Activated CD4-positive, alpha-beta T cell treated with anti-CD3 and anti-CD28 coated beads for 36 hours (primary cell): ENCODE measurements at regions of chr3 and their contacts with region 1.

Region 1: GRCh38 chr3:187139126-187139894 is at the start of gene RPL39L:
- DNase-seq: peak; percentile 97
- ATAC-seq: peak; percentile 94
- H3K4me3 Mint-ChIP-seq: peak within 1 kb of the TSS; percentile 79
- H3K27ac Mint-ChIP-seq: peak within 1 kb of the TSS; percentile 95
- H3K4me1 Mint-ChIP-seq: peaks cover 27% of the 10 kb centered on the region
- H3K27me3 Mint-ChIP-seq: no peaks in the 10 kb centered on the region
- total RNA-seq, gene RPL39L: 18.2 to 21.4 TPM

Region 2: DNA sequence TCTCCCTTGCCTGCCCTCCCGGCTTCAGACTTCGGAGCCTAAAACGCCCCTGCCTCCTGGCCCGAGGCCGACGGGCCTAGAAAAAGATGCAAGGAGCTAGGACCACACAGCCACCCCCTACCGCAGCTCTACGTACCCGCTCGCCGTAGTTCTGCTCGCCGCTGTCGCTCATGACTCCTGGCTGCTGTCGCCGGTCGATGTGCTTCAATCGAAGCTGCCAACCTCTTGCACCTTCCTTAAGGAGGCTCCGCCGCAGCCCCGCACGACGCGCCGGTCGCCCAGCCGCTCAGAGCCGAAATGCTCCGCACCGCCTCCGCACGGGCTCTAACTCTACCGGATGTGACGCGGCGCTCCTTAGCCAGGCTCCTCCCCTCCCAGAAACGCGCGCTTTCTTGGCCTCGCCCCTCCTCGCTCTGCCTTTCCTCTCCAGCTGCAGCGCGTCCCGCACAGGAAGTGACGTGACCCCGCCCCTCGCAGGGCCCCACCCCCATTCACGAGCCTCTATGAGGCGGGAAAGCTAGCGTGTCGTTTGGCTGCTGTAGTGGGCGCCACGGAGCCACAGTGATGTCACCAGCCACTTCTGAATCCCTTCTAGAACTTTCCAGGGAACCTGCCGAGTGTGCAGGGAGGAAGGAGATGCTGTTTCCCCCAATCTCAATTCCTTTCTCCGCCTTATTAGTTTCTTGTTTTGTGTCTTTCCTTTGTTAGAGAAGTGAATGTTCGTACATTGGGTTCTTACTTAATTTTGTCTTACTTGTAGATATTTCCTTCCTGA is 1201.4 kb before region 1 on chr3 and contains the start of gene TRA2B:
- CTCF ChIA-PET with region 1: no interaction called
- POLR2A ChIA-PET with region 1: no interaction called
- intact Hi-C with region 1: loop called in 1 of 2 experiments (anchors 5 kb)
- DNase-seq: peak; percentile 100
- ATAC-seq: peak; percentile 90
- H3K4me3 Mint-ChIP-seq: peak within 1 kb of the TSS; percentile 97
- H3K27ac Mint-ChIP-seq: peak within 1 kb of the TSS; percentile 100
- H3K4me1 Mint-ChIP-seq: peaks cover 23% of the 10 kb centered on the region
- H3K27me3 Mint-ChIP-seq: no peaks in the 10 kb centered on the region
- total RNA-seq, gene TRA2B: 228 to 344 TPM

Region 3: DNA sequence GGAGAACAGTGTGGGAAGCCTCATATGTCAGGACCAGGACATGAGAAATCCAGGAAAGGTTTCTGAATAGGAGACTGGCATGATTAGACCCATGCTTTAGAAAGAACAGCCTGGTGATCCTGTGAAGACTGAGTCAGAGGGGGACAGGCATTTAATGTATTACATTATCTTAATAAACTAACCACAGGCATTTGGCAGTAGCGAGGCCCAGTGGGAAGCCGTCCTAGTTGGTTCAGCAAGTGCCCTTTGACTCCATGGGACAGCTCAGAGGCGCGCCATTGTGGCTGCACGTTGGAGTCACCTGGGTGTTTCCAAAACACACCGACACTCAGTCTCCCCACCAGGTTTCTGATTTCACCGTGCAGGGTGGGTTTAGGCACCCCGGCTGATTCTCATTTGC is 686.8 kb before region 1 on chr3:
- CTCF ChIA-PET with region 1: no interaction called
- POLR2A ChIA-PET with region 1: no interaction called
- intact Hi-C with region 1: no loop called
- DNase-seq: no peak
- ATAC-seq: no peak
- H3K4me3 Mint-ChIP-seq: no peak overlapping the region
- H3K27ac Mint-ChIP-seq: no peak overlapping the region
- H3K4me1 Mint-ChIP-seq: no peaks in the 10 kb centered on the region
- H3K27me3 Mint-ChIP-seq: no peaks in the 10 kb centered on the region

Region 4: DNA sequence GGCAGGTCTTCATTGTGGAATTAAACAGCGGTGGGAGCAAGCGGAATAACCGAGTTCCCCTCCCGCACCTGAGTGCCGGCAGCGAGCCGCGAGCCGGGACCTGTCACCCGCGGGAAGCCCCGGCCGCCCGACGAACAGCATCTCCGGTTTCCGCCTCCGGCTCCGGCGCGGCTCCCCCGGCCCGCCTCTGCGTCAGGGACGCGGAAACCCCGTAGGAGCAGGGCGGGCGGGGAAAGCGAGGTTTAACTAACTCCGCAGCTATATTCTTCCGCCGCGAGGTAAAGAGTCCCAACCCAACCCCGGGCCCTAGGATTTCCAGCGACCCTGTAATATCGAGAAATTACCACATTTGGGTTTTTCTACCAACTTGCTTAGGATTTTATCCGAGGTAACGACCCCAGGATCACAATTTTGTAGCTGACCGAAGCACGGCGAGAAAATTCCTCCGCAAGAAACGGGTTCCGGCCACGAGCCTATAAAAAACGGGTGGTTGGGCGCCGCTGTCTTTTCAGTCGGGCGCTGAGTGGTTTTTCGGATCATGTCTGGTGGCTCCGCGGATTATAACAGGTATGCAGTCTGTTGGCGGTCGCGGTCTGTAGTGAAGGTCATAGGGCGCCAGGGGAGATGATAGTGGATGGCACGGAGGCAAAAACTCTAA is 356.1 kb before region 1 on chr3 and contains the start of gene EIF4A2:
- CTCF ChIA-PET with region 1: interaction called, 3 read pairs
- POLR2A ChIA-PET with region 1: no interaction called
- intact Hi-C with region 1: loop called in 1 of 2 experiments (anchors 1 kb)
- DNase-seq: peak; percentile 95
- ATAC-seq: peak; percentile 69
- H3K4me3 Mint-ChIP-seq: peak within 1 kb of the TSS; percentile 100
- H3K27ac Mint-ChIP-seq: peak within 1 kb of the TSS; percentile 100
- H3K4me1 Mint-ChIP-seq: peaks cover 32% of the 10 kb centered on the region
- H3K27me3 Mint-ChIP-seq: no peaks in the 10 kb centered on the region
- total RNA-seq, gene EIF4A2: 291 to 390 TPM

Region 5: DNA sequence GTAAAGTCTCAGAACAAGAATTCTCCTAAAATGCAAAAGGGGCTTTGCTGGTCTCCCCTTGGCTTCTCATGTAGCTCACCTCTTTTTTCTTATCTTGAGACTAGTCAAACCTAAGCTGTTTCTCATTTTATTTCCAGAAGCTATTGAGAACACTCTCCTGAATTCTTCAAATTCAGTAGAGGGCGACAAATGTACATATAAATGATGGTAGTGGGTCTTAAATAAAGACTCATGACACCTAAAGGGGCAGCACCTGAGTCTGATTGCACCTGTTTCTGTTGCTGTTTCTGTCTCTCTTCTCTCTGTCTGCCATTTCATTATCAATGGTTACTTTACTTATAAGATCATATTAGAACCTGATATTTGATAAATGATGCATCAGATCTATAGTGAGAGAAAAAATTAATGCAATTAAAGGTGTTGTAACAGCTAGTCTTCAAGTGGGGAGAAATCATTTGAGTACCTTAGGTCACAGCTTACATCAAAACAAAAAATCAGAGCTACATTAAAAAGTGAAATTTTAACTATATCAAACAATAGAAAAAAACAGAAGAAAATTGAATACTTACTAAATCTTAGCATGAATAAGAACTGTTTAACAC is 289.8 kb before region 1 on chr3:
- CTCF ChIA-PET with region 1: interaction called, 11 read pairs
- POLR2A ChIA-PET with region 1: no interaction called
- intact Hi-C with region 1: no loop called
- DNase-seq: peak; percentile 32
- ATAC-seq: peak; percentile 90
- H3K4me3 Mint-ChIP-seq: no peak overlapping the region
- H3K27ac Mint-ChIP-seq: peak overlapping the region; percentile 52
- H3K4me1 Mint-ChIP-seq: peaks cover 18% of the 10 kb centered on the region
- H3K27me3 Mint-ChIP-seq: peaks cover 7% of the 10 kb centered on the region

Region 6: GRCh38 chr3:187025656-187026316 is 113.5 kb before region 1 on chr3:
- CTCF ChIA-PET with region 1: interaction called, 8 read pairs
- POLR2A ChIA-PET with region 1: interaction called, 4 read pairs
- intact Hi-C with region 1: loop called (anchors 2 to 5 kb)
- DNase-seq: peak; percentile 64
- ATAC-seq: peak; percentile 36
- H3K4me3 Mint-ChIP-seq: peak overlapping the region; percentile 85
- H3K27ac Mint-ChIP-seq: peak overlapping the region; percentile 97
- H3K4me1 Mint-ChIP-seq: peaks cover 49% of the 10 kb centered on the region
- H3K27me3 Mint-ChIP-seq: no peaks in the 10 kb centered on the region

Region 7: GRCh38 chr3:187122261-187122660 is 17.0 kb before region 1 on chr3:
- CTCF ChIA-PET with region 1: interaction called, 12 read pairs
- POLR2A ChIA-PET with region 1: no interaction called
- intact Hi-C with region 1: no loop called
- DNase-seq: no peak
- ATAC-seq: no peak
- H3K4me3 Mint-ChIP-seq: no peak overlapping the region
- H3K27ac Mint-ChIP-seq: no peak overlapping the region
- H3K4me1 Mint-ChIP-seq: no peaks in the 10 kb centered on the region
- H3K27me3 Mint-ChIP-seq: no peaks in the 10 kb centered on the region

Region 8: GRCh38 chr3:187164885-187165543 is 25.7 kb after region 1 on chr3:
- CTCF ChIA-PET with region 1: interaction called, 32 read pairs
- POLR2A ChIA-PET with region 1: interaction called, 3 read pairs
- intact Hi-C with region 1: loop called (anchors 1 to 2 kb)
- DNase-seq: peak; percentile 36
- ATAC-seq: peak; percentile 70
- H3K4me3 Mint-ChIP-seq: no peak overlapping the region
- H3K27ac Mint-ChIP-seq: no peak overlapping the region
- H3K4me1 Mint-ChIP-seq: peaks cover 2% of the 10 kb centered on the region
- H3K27me3 Mint-ChIP-seq: no peaks in the 10 kb centered on the region

Region 9: GRCh38 chr3:187567661-187568121 is 428.4 kb after region 1 on chr3:
- CTCF ChIA-PET with region 1: no interaction called
- POLR2A ChIA-PET with region 1: no interaction called
- intact Hi-C with region 1: no loop called
- DNase-seq: no peak
- ATAC-seq: no peak
- H3K4me3 Mint-ChIP-seq: no peak overlapping the region
- H3K27ac Mint-ChIP-seq: no peak overlapping the region
- H3K4me1 Mint-ChIP-seq: no peaks in the 10 kb centered on the region
- H3K27me3 Mint-ChIP-seq: peaks cover 17% of the 10 kb centered on the region